ENCODE measurements at regions of chr10 and their contacts with region 1.

Region 1: DNA sequence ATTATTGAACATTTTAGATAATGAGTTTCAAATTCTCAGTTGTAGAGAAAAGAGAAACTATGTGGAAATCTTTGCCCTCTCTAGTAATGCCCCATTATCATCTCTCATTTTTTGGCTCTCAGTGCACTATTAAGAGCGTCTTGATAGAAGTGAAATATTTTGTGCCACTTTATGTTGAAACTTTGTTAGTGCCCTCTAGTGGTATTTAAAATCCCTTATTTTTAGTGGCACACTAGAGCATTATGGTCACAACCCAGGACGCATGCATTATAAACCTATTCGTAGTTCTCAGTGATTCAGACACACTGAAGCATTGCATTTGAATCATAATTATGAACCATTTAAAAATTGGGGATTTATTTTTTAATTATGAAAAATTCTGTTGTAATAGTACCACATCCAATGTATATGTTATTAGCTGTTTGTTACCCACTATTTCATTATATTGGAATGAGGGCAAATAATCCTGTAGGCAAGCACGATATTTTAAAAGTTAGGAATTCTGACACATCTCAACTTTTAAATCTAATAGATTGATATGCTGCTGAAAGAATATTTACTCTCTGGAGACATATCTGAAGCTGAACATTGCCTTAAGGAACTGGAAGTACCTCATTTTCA is 21.9 kb downstream of the PDCD4 start:
- DNase-seq: peak; percentile 41
- H3K4me3 ChIP-seq: no peak overlapping the region
- H3K27ac ChIP-seq: no peak overlapping the region; a peak in 1 of 4 replicates
- H3K4me1 ChIP-seq: peaks cover 0 to 6% of the 10 kb centered on the region in 2 experiments; a peak in 1 of 4 replicates
- H3K27me3 ChIP-seq: no peaks in the 10 kb centered on the region
- CTCF ChIP-seq: peak; percentile 71
- EP300 ChIP-seq: no peak
- RAD21 ChIP-seq: peak; percentile 73

Region 2: GRCh38 chr10:110739811-110740271 is 153.8 kb before region 1 on chr10:
- CTCF ChIA-PET with region 1: interaction called, 11 read pairs
- POLR2A ChIA-PET with region 1: no interaction called
- DNase-seq: no peak
- H3K4me3 ChIP-seq: no peak overlapping the region
- H3K27ac ChIP-seq: no peak overlapping the region
- H3K4me1 ChIP-seq: peaks cover 0 to 15% of the 10 kb centered on the region in 2 experiments; a peak in 1 of 4 replicates
- H3K27me3 ChIP-seq: no peaks in the 10 kb centered on the region
- CTCF ChIP-seq: no peak
- EP300 ChIP-seq: no peak
- RAD21 ChIP-seq: no peak

Region 3: GRCh38 chr10:110794808-110795207 is 98.9 kb before region 1 on chr10:
- CTCF ChIA-PET with region 1: interaction called, 15 read pairs
- POLR2A ChIA-PET with region 1: no interaction called
- DNase-seq: no peak
- H3K4me3 ChIP-seq: no peak overlapping the region
- H3K27ac ChIP-seq: peak overlapping the region in 1 of 2 experiments; percentile 99; a peak in 2 of 4 replicates
- H3K4me1 ChIP-seq: peaks cover 7 to 71% of the 10 kb centered on the region in 2 experiments; a peak in 2 of 4 replicates
- H3K27me3 ChIP-seq: no peaks in the 10 kb centered on the region
- CTCF ChIP-seq: no peak
- EP300 ChIP-seq: no peak
- RAD21 ChIP-seq: no peak

Region 4: GRCh38 chr10:110803830-110804338 is 89.8 kb before region 1 on chr10:
- CTCF ChIA-PET with region 1: interaction called, 27 read pairs
- POLR2A ChIA-PET with region 1: no interaction called
- DNase-seq: peak; percentile 72
- H3K4me3 ChIP-seq: no peak overlapping the region
- H3K27ac ChIP-seq: peak overlapping the region in 1 of 2 experiments; percentile 68; a peak in 2 of 4 replicates
- H3K4me1 ChIP-seq: peaks cover 8 to 33% of the 10 kb centered on the region in 2 experiments; a peak in 3 of 4 replicates
- H3K27me3 ChIP-seq: no peaks in the 10 kb centered on the region
- CTCF ChIP-seq: peak; percentile 53
- EP300 ChIP-seq: no peak
- RAD21 ChIP-seq: peak; percentile 80

Region 5: GRCh38 chr10:110912374-110912773 is 18.7 kb after region 1 on chr10:
- CTCF ChIA-PET with region 1: interaction called, 18 read pairs
- POLR2A ChIA-PET with region 1: no interaction called
- DNase-seq: peak; percentile 42
- H3K4me3 ChIP-seq: no peak overlapping the region; a peak in 2 of 4 replicates
- H3K27ac ChIP-seq: peak overlapping the region; percentile 77 to 86
- H3K4me1 ChIP-seq: peaks cover 11 to 17% of the 10 kb centered on the region in 2 experiments; a peak in 3 of 4 replicates
- H3K27me3 ChIP-seq: no peaks in the 10 kb centered on the region
- CTCF ChIP-seq: no peak
- EP300 ChIP-seq: peak; percentile 63 to 87; a peak in 3 of 4 replicates
- RAD21 ChIP-seq: no peak

Measured in SK-N-SH (cell line).